ENCODE measurements at regions of chr16 and their contacts with region 1.

Region 1: DNA sequence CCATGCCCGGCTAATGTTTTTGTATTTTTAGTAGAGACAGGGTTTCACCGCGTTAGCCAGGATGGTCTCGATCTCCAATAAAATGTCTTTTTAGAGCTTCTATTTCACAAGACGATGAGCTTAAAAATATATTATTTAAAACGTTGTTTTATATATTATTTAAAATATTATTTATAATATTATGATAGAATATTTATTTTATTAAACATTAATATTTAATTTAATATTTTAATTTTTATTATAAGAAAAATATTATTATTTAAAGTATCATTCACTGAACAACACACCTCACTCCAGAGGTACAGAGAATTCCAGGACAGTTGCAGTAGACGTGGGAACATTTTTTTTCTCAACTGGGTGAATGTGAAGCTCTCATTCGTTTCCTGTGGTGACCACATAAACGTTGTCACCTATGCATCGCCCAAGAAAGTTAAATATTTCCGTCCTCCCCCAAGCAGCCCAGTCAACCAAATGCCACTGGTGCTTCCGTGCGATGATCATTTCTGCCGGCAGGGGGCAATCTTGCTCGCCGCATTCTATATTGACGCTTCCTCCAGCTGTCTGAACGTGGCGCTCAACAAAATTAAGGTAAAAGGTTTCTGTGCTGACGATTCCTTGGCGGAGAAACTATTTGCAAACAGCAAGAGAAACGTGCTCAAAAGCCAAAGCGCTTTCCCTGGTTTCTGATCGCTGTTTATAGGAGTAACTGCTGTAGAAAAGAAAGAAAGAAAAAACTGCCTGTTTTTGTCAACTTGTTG is 41.7 kb upstream of the PRSS54 start:
- DNase-seq: peak; percentile 84
- ATAC-seq: peak; percentile 66

Region 2: DNA sequence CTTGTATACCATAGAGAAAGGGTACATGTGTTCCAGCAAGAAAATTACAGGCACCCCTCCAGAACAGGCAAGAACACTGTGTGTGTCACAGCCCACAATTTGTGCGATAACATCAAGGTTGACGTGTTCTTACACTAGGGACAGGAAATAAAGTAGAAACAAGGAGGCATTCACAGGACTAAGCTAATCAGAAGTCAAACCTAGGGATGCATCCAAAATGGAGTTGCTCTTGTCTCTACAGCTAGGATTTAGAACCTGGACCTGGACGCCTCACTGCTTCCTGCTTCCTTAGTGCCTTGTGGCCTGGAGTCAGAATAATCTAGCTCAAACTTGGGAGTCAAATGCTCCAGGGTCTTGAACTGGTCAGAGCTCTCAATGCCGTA is 97.0 kb after region 1 on chr16:
- intact Hi-C with region 1: loop called (anchors 5 kb)
- DNase-seq: no peak
- ATAC-seq: no peak

Measured in Right ventricle myocardium inferior (tissue), 1 donor.